SK-N-SH (cell line): ENCODE measurements at regions of chr10 and their contacts with region 1.

Region 1: GRCh38 chr10:131874991-131875451 is 25.8 kb upstream of the PPP2R2D start:
- DNase-seq: peak; percentile 93
- H3K4me3 ChIP-seq: no peak overlapping the region; a peak in 1 of 4 replicates
- H3K27ac ChIP-seq: no peak overlapping the region
- H3K4me1 ChIP-seq: no peaks in the 10 kb centered on the region; a peak in 1 of 4 replicates
- H3K27me3 ChIP-seq: no peaks in the 10 kb centered on the region
- CTCF ChIP-seq: peak; percentile 64
- EP300 ChIP-seq: no peak
- RAD21 ChIP-seq: peak; percentile 93

Region 2: DNA sequence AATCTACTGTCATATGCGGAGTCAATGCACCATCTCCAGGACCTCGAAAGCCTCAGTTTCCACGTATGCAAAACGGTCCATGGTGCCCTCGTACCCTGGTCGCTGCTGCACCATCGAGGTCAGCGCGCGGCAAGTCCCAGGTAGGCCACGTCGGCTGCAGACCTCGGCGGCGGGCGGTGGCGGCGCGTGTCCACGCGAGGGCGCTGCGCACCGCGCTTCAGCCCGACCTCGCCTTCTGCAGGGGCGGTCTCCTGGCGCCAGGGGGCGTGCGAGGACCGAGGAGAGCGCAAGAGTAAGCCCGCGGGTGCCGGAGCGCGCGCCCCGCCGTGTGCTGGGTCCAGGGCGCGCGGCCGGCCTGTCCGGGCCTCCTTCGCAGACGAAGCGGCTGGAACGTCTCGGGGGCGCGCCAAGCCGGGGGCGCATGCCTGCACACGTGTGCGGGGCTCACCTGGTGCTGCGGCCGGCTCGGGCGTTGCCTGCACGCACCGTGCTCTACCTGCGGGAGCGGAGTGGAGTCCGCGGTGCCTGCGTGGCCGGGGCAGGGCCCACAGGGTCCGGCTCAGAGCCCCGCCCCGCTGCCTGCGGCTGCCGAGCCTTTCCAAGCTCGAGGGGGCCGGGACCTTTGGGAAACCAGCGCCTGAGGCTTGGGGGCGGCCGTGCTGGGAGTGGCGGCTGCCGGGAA is 1684.8 kb before region 1 on chr10:
- CTCF ChIA-PET with region 1: interaction called, 11 read pairs
- POLR2A ChIA-PET with region 1: no interaction called
- DNase-seq: peak; percentile 98
- H3K4me3 ChIP-seq: peak overlapping the region; percentile 52 to 58
- H3K27ac ChIP-seq: no peak overlapping the region
- H3K4me1 ChIP-seq: peaks cover 0 to 23% of the 10 kb centered on the region in 2 experiments; a peak in 1 of 4 replicates
- H3K27me3 ChIP-seq: no peaks in the 10 kb centered on the region
- CTCF ChIP-seq: peak; percentile 90
- EP300 ChIP-seq: no peak
- RAD21 ChIP-seq: peak; percentile 92

Region 3: DNA sequence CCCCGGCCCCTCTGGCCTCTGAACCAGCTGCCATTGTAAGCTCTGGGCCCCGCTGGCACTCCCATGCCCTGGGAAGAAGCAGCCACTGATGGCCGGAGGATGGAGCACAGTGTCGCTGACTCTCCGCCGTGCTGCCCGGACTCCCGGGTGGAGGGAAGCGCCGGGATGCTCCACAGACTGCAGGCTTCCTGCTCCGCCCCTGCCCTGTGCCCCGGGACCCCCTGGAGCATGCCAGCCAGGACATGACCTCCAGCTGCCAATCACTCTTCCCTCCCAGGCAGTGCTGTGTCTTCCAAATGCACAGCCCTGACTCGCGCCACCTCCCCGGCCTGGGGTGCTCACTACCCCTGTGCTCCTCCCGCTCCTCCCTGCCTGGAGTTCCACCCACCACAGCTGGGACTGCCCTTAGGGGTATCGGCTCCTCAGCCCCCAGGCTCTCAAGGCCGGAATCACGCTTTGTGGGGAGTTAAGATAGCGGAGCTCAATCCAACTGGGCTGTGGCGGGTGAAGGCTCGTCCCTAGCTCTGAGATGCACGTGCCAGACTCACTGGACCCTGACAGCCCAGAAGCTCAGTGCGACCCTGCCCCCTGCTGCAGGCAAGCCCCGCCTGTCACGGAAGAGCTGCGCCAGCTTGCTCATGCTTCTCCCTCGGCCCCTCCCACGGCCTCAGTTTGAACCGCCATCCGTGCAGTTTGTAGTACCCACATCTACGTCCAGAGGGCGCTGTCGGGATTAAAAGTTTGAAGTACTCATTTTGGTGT is 421.2 kb before region 1 on chr10:
- CTCF ChIA-PET with region 1: interaction called, 43 read pairs
- POLR2A ChIA-PET with region 1: no interaction called
- DNase-seq: peak; percentile 85
- H3K4me3 ChIP-seq: no peak overlapping the region
- H3K27ac ChIP-seq: no peak overlapping the region
- H3K4me1 ChIP-seq: peaks cover 0 to 3% of the 10 kb centered on the region in 2 experiments; a peak in 1 of 4 replicates
- H3K27me3 ChIP-seq: no peaks in the 10 kb centered on the region
- CTCF ChIP-seq: peak; percentile 40
- EP300 ChIP-seq: no peak
- RAD21 ChIP-seq: peak; percentile 66

Region 4: DNA sequence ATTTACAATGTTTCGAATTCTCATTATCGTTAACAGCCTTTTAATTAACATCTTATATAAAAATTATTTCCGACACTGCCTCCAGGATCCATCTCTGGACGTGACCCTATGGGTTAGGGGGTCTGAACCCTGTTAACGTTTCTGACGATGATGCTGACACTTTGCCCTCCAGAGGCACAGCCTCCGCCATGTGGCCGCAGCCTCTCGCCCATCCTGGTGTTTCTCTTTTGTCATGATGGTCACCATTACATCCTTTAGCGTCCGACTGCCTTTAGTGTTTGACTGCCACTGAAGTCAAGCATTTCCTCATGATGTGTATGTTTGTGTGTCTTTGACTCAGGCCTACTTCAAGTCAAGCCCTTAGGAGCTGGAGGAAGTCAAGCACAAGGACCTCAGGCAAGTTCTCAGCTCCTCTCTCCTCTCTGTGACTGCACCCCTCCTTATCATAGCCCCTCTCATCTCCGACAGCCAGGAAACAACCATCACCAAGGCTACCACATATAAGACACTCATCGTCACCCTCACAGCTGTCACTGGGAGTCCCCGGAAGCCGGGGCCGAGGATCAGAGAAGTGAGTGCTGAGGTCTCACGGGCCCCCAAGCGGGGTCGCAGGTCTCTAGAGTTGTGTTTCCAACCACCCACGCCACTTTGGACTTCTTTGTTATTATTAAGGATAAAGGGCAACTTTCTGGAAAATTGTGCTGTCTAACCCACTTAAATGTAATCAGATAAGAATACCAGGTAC is 70.3 kb before region 1 on chr10:
- CTCF ChIA-PET with region 1: no interaction called
- POLR2A ChIA-PET with region 1: no interaction called
- DNase-seq: no peak
- H3K4me3 ChIP-seq: no peak overlapping the region
- H3K27ac ChIP-seq: no peak overlapping the region
- H3K4me1 ChIP-seq: no peaks in the 10 kb centered on the region
- H3K27me3 ChIP-seq: no peaks in the 10 kb centered on the region
- CTCF ChIP-seq: no peak
- EP300 ChIP-seq: no peak
- RAD21 ChIP-seq: no peak

Region 5: DNA sequence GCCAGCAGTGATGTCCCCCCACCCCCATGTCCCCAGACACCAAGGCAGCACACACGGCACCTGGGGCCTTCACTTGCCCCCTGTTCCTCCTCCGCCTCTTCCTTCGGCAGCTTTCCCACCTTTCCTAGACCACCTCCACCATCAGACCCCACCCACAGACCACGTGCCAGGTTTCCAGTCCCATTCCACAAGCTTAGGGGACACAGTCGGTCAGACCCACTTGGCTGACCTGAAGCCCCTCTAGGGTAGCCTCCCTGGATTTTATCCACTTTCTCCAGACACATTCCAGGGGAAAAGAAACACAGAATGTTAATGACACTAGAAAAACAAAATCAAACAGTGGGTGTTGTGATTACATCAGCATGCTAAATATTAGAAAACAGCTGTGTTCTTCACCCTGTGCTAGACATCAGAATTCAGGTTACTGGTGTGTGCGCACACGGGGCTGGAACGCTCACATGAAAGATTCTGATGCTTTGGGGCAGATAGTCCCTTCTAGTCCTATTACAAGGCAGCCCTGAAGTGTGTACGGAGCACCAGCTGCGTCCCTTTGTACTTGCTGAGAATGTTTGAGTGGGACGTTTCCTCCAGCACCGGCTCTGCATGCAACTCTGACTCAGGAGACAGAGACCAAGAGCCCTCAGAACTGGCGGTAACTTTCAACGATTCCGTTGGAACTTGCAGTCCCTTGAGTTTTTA is 49.7 kb before region 1 on chr10:
- CTCF ChIA-PET with region 1: interaction called, 10 read pairs
- POLR2A ChIA-PET with region 1: no interaction called
- DNase-seq: no peak
- H3K4me3 ChIP-seq: no peak overlapping the region
- H3K27ac ChIP-seq: no peak overlapping the region
- H3K4me1 ChIP-seq: no peaks in the 10 kb centered on the region
- H3K27me3 ChIP-seq: no peaks in the 10 kb centered on the region
- CTCF ChIP-seq: no peak
- EP300 ChIP-seq: no peak
- RAD21 ChIP-seq: no peak

Region 6: DNA sequence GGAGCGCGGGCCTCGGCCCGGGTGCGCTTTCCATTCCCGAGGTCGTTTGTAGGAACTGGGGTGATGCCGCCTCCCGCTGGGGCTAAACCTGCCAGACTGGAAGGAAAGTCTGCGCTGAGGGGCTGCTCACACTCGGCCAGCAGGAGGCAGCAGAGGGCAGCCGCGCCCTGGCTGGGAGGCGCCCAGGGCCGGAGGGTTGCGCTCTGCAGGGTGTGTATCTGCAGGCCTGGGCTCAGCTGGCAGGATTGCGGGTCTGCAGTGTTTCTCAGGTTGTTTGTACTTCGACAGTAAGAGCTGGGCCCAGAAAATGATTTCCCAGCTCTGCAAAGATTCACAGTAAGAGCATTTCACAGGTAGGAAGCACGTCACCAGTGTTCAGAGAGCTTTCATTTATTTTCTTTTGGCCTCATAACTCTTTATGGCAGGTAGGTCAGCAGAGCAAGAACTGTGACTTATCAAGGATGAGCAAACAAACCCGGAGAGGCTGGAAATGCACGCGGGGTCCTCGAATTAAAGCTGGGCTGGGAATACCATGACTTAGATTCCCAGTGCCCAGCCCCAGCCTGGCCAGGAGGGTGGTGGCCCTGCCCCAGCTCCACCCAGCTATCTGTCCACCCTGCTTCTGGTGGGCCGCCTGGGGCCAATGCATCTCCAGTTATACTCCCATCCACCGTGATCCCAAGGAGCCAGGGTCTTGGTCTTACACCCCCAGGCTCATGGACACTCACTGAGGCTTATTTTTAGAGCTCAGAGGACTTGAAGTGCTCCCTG is 10.6 kb after region 1 on chr10:
- CTCF ChIA-PET with region 1: interaction called, 11 read pairs
- POLR2A ChIA-PET with region 1: no interaction called
- DNase-seq: peak; percentile 93
- H3K4me3 ChIP-seq: no peak overlapping the region; a peak in 1 of 4 replicates
- H3K27ac ChIP-seq: no peak overlapping the region
- H3K4me1 ChIP-seq: no peaks in the 10 kb centered on the region; a peak in 1 of 4 replicates
- H3K27me3 ChIP-seq: no peaks in the 10 kb centered on the region
- CTCF ChIP-seq: peak; percentile 81
- EP300 ChIP-seq: no peak
- RAD21 ChIP-seq: peak; percentile 89

Region 7: DNA sequence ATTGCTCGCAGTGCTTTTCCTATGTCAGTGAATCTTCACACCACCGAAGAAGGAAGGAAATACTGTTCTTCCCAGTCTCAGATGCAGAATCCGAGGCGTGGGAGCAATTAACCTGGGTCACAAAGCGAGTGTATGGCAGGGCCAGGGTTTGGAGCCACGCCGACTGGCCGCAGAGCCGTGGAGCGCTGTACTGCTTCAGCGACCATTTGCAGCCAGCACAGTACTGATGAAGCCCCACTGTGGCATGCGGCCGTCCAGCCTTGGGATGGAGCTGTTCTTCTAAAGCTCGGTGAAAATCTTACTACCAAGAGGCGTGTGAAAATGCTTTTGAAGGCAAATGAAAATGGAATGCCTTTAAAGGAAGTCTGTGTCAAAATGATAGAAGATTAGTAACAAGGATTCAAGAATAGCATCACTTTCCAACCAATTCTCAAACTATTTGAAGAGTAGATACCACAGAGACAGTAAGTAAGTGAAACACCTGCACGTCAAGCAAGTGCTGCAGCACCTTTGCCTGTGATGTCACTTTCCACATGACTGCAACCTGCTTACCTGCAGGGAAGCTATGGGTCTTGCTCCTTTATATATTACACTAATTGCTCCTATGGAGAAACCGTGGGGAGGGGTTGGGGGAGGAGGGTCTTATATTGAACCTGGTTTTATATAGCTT is 30.7 kb after region 1 on chr10:
- CTCF ChIA-PET with region 1: no interaction called
- POLR2A ChIA-PET with region 1: no interaction called
- DNase-seq: no peak
- H3K4me3 ChIP-seq: no peak overlapping the region
- H3K27ac ChIP-seq: no peak overlapping the region
- H3K4me1 ChIP-seq: peaks cover 11 to 20% of the 10 kb centered on the region in 2 experiments; a peak in 3 of 4 replicates
- H3K27me3 ChIP-seq: no peaks in the 10 kb centered on the region
- CTCF ChIP-seq: no peak
- EP300 ChIP-seq: no peak
- RAD21 ChIP-seq: no peak